WTC11 (cell line): ENCODE measurements at regions of chr13 and their contacts with region 1.

Region 1: GRCh38 chr13:52809310-52809769 is 39.1 kb downstream of the PCDH8 start:
- DNase-seq: peak; percentile 83
- ATAC-seq: peak; percentile 96
- H3K4me3 Mint-ChIP-seq: no peak overlapping the region
- H3K27ac Mint-ChIP-seq: no peak overlapping the region
- H3K4me1 Mint-ChIP-seq: peaks cover 16% of the 10 kb centered on the region
- H3K27me3 Mint-ChIP-seq: no peaks in the 10 kb centered on the region
- CTCF ChIP-seq: peak; percentile 80

Region 2: DNA sequence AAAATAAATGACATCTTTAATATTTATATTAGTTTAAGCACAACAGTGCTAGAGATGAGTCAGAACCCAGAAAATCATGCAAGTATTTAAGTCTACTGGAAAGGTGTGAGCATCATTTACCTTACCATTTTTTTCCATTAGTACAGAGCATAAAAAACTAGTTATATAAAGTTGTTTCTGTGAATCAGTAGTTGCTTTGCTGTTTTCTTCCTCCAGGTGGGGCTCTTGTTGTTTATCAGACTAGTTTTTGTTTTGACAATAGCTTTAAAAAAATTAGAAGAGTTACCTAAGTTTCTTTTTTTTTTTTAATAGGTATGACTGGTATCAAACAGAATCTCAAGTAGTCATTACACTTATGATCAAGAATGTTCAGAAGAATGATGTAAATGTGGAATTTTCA is 144.0 kb before region 1 on chr13:
- CTCF ChIA-PET with region 1: interaction called, 65 read pairs
- POLR2A ChIA-PET with region 1: interaction called, 5 read pairs
- DNase-seq: no peak
- ATAC-seq: no peak
- H3K4me3 Mint-ChIP-seq: no peak overlapping the region
- H3K27ac Mint-ChIP-seq: no peak overlapping the region
- H3K4me1 Mint-ChIP-seq: peaks cover 2% of the 10 kb centered on the region; the same call in 1 of the 2 replicates
- H3K27me3 Mint-ChIP-seq: no peaks in the 10 kb centered on the region
- CTCF ChIP-seq: no peak

Region 3: DNA sequence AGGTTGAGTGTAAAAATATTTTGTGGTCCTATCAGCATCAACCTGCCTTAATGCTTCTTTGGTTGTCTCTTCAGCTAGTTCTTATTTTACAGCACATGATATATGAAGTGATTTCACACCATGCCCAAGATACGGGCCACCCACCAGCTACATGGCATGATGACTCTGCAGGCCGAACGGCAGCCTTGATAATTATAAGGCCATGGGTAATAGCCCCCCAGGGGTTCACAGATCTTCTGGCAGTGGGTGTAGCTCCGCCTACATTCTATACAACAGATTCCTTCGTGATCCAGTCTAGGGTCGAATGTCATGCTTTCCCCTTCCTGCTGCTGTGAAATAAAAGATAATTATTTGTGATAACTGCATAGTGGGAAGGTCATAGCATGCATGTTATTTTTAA is 105.9 kb before region 1 on chr13:
- CTCF ChIA-PET with region 1: interaction called, 13 read pairs
- POLR2A ChIA-PET with region 1: no interaction called
- DNase-seq: no peak
- ATAC-seq: peak; percentile 50
- H3K4me3 Mint-ChIP-seq: no peak overlapping the region
- H3K27ac Mint-ChIP-seq: no peak overlapping the region
- H3K4me1 Mint-ChIP-seq: peaks cover 32% of the 10 kb centered on the region
- H3K27me3 Mint-ChIP-seq: no peaks in the 10 kb centered on the region
- CTCF ChIP-seq: no peak

Region 4: GRCh38 chr13:52738719-52739467 is 70.4 kb before region 1 on chr13:
- CTCF ChIA-PET with region 1: interaction called, 41 read pairs
- POLR2A ChIA-PET with region 1: interaction called, 3 read pairs
- DNase-seq: peak; percentile 68
- ATAC-seq: peak; percentile 62
- H3K4me3 Mint-ChIP-seq: peak overlapping the region; percentile 93
- H3K27ac Mint-ChIP-seq: peak overlapping the region; percentile 71
- H3K4me1 Mint-ChIP-seq: peaks cover 48% of the 10 kb centered on the region
- H3K27me3 Mint-ChIP-seq: peaks cover 7% of the 10 kb centered on the region; the same call in 1 of the 2 replicates
- CTCF ChIP-seq: peak; percentile 60